ENCODE measurements at regions of chr4 and their contacts with region 1.

Region 1: DNA sequence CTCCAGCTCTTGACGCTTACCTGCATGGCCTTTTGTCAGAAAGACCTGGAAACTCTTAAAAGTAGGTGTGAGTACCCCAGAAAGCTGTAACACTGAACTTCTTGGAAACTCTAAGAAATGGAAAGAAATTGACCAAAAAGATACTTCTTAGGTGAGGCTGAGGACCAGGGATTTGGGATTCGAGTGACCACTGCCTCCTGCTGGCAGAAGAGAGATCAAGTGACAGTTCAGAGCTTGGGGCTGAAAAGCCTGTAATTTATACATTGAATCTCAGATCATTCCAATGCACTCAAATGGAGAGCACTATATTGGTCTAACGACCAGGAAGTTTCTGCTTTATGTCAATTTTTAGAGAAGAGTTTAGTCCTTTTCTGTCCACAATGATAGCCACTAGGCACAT is 204.6 kb downstream of the PDGFRA start:
- DNase-seq: no peak
- H3K4me3 ChIP-seq: no peak overlapping the region
- H3K27me3 ChIP-seq: peaks cover 6% of the 10 kb centered on the region
- CTCF ChIP-seq: peak; percentile 48

Region 2: DNA sequence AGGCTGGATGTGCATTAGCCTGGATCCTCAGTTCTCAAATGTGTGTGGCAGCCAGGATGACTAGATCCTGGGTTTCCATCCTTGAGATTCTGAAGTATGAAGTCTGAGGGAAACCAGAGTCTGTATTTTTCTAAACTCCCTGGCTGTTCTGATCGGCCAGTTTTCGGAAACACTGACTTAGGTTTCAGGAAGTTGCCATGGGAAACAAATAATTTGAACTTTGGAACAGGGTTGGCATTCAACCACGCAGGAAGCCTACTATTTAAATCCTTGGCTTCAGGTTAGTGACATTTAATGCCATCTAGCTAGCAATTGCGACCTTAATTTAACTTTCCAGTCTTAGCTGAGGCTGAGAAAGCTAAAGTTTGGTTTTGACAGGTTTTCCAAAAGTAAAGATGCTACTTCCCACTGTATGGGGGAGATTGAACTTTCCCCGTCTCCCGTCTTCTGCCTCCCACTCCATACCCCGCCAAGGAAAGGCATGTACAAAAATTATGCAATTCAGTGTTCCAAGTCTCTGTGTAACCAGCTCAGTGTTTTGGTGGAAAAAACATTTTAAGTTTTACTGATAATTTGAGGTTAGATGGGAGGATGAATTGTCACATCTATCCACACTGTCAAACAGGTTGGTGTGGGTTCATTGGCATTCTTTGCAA is 137.0 kb before region 1 on chr4:
- CTCF ChIA-PET with region 1: no interaction called
- POLR2A ChIA-PET with region 1: no interaction called
- DNase-seq: no peak
- H3K4me3 ChIP-seq: no peak overlapping the region
- H3K27me3 ChIP-seq: no peaks in the 10 kb centered on the region
- CTCF ChIP-seq: no peak

Region 3: GRCh38 chr4:54423066-54423465 is 10.6 kb before region 1 on chr4:
- CTCF ChIA-PET with region 1: interaction called, 10 read pairs
- POLR2A ChIA-PET with region 1: interaction called, 3 read pairs
- DNase-seq: peak; percentile 17
- H3K4me3 ChIP-seq: no peak overlapping the region
- H3K27me3 ChIP-seq: no peaks in the 10 kb centered on the region
- CTCF ChIP-seq: no peak

Measured in BJ (cell line).